Calu3 (cell line): ENCODE measurements at regions of chr15 and their contacts with region 1.

Region 1: GRCh38 chr15:96261575-96262034 is 68.9 kb upstream of the NR2F2 start:
- DNase-seq: no peak
- H3K4me3 Mint-ChIP-seq: no peak overlapping the region
- H3K27ac Mint-ChIP-seq: peak overlapping the region; percentile 99
- H3K4me1 Mint-ChIP-seq: peaks cover 69% of the 10 kb centered on the region
- H3K27me3 Mint-ChIP-seq: no peaks in the 10 kb centered on the region
- CTCF ChIP-seq: no peak

Region 2: DNA sequence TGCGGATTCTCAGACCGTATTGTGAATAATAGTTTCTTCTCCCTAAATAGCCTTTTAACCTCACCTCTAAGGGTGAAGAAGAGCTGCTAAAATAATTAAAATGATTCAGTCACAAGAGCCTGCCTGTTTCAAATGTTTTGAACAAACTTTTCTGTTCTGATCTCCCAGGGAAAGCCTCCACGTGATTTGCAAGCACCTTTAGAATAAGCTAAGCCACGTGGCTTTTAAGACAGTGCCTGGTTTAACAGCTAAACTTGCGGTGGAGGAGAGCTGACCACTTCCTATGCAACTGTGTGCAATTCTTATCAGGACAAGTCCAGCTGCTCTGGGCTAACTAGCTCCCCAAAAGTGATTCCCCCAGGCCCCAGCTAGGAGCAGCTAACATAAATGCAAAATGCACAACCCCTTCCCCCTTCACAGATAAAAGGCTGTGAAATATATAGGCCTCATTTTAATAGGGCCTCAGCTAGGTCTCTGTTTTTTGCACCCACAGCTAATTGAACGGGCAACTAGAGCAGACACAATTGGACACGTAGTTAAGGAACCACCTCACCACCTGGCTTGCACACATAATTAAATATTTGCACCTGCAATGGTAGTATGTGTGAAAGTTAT is 332.3 kb before region 1 on chr15:
- CTCF ChIA-PET with region 1: no interaction called
- intact Hi-C with region 1: loop called (anchors 10 kb)
- DNase-seq: no peak
- H3K4me3 Mint-ChIP-seq: no peak overlapping the region
- H3K27ac Mint-ChIP-seq: no peak overlapping the region
- H3K4me1 Mint-ChIP-seq: no peaks in the 10 kb centered on the region
- H3K27me3 Mint-ChIP-seq: no peaks in the 10 kb centered on the region
- CTCF ChIP-seq: no peak

Region 3: GRCh38 chr15:96011136-96011535 is 250.5 kb before region 1 on chr15:
- CTCF ChIA-PET with region 1: no interaction called
- intact Hi-C with region 1: no loop called
- DNase-seq: no peak
- H3K4me3 Mint-ChIP-seq: no peak overlapping the region
- H3K27ac Mint-ChIP-seq: no peak overlapping the region
- H3K4me1 Mint-ChIP-seq: no peaks in the 10 kb centered on the region
- H3K27me3 Mint-ChIP-seq: no peaks in the 10 kb centered on the region
- CTCF ChIP-seq: no peak

Region 4: GRCh38 chr15:96053031-96053780 is 208.4 kb before region 1 on chr15:
- CTCF ChIA-PET with region 1: no interaction called
- intact Hi-C with region 1: loop called (anchors 5 kb)
- DNase-seq: peak; percentile 75
- H3K4me3 Mint-ChIP-seq: peak overlapping the region; percentile 67
- H3K27ac Mint-ChIP-seq: peak overlapping the region; percentile 93
- H3K4me1 Mint-ChIP-seq: peaks cover 25% of the 10 kb centered on the region
- H3K27me3 Mint-ChIP-seq: no peaks in the 10 kb centered on the region
- CTCF ChIP-seq: no peak

Region 5: GRCh38 chr15:96230465-96231181 is 31.0 kb before region 1 on chr15:
- CTCF ChIA-PET with region 1: interaction called, 10 read pairs
- intact Hi-C with region 1: loop called (anchors 1 kb)
- DNase-seq: no peak
- H3K4me3 Mint-ChIP-seq: no peak overlapping the region
- H3K27ac Mint-ChIP-seq: peak overlapping the region; percentile 84
- H3K4me1 Mint-ChIP-seq: peaks cover 65% of the 10 kb centered on the region
- H3K27me3 Mint-ChIP-seq: no peaks in the 10 kb centered on the region
- CTCF ChIP-seq: no peak

Region 6: GRCh38 chr15:96321639-96322535 is 60.3 kb after region 1 on chr15:
- CTCF ChIA-PET with region 1: interaction called, 7 read pairs
- intact Hi-C with region 1: loop called (anchors 1 kb)
- DNase-seq: peak; percentile 63
- H3K4me3 Mint-ChIP-seq: no peak overlapping the region
- H3K27ac Mint-ChIP-seq: peak overlapping the region; percentile 98
- H3K4me1 Mint-ChIP-seq: peaks cover 38% of the 10 kb centered on the region
- H3K27me3 Mint-ChIP-seq: no peaks in the 10 kb centered on the region
- CTCF ChIP-seq: no peak

Region 7: DNA sequence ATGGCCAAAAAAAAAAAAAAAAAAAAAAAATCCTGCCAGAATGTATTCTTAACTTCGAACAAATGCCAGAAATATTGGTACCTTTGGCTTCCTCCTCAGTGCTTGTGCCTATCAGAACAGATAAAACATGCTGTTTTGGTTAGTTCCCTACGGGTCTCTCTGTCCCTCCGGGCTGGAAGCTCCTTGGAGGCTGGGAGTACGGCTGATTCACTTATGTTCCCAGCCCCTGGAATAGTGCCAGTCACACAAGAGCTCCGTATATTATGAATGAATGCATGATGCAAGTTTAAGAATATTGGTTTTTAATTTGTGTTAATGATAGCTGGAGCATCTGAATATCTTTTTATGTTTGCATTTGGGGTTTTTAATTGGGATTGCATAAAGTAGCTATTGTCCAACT is 112.9 kb after region 1 on chr15:
- CTCF ChIA-PET with region 1: no interaction called
- intact Hi-C with region 1: no loop called
- DNase-seq: no peak
- H3K4me3 Mint-ChIP-seq: no peak overlapping the region
- H3K27ac Mint-ChIP-seq: no peak overlapping the region
- H3K4me1 Mint-ChIP-seq: peaks cover 6% of the 10 kb centered on the region
- H3K27me3 Mint-ChIP-seq: no peaks in the 10 kb centered on the region
- CTCF ChIP-seq: no peak

Region 8: DNA sequence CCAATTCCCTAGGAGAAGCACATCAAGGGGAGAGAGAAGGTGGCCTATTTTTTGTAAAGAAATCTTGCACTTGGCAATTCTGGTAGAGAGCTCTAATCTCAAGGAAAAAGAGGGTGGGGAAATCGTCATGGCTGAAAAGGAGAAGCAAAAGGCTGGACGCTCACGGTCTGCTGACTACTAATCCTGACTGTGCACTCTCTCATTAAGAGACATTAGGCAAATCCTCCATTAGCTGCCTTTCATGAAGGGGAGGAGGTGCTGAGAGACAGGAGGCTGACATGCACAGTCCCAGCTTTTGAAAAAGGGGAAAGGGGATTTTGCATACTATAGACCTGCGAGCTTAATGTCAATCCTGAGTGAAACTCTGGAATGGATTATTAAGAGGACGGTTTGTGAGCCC is 238.9 kb after region 1 on chr15:
- CTCF ChIA-PET with region 1: no interaction called
- intact Hi-C with region 1: no loop called
- DNase-seq: no peak
- H3K4me3 Mint-ChIP-seq: no peak overlapping the region
- H3K27ac Mint-ChIP-seq: no peak overlapping the region
- H3K4me1 Mint-ChIP-seq: no peaks in the 10 kb centered on the region
- H3K27me3 Mint-ChIP-seq: no peaks in the 10 kb centered on the region
- CTCF ChIP-seq: no peak